GM10248 (cell line): ENCODE measurements at regions of chr5 and their contacts with region 1.

Region 1: DNA sequence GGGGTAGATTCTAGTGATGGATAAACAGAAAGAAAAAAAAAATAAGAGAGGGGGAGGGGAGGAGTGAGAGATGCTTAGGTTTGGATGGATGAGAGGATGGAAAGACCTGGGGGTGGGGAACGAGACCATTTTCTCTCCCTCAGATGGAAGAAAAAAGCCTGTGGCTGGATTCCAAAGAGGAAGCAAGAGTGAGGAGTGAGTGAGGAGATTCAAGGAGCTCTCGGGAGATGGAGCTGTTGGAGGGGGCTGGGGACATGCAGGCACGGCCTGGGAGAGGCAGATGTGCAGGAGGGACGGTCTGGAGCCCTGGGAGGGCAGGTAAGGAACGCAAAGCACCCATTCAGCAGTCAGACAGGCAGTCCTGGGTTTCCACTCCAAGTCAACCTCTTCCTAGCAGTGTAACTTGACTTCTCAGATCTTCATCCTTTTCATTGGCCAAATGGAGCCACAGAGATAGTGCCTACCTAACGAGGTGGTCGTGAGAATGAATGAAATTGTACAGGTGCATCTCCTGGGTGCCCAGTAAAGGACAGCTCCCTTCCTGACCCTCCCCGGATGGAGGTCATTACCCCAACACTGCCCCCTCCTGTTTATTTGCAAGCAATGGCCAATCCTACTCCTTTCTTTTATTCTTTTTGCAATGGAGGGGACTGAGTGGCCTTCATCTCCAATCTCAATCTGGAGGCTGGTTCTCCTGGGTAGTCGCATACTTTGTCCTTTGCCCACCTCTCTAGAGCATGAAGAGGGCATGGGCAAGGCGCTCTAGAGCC is 52.2 kb downstream of the PCDH1 start:
- DNase-seq: peak; percentile 60
- CTCF ChIP-seq: peak; percentile 29

Region 2: DNA sequence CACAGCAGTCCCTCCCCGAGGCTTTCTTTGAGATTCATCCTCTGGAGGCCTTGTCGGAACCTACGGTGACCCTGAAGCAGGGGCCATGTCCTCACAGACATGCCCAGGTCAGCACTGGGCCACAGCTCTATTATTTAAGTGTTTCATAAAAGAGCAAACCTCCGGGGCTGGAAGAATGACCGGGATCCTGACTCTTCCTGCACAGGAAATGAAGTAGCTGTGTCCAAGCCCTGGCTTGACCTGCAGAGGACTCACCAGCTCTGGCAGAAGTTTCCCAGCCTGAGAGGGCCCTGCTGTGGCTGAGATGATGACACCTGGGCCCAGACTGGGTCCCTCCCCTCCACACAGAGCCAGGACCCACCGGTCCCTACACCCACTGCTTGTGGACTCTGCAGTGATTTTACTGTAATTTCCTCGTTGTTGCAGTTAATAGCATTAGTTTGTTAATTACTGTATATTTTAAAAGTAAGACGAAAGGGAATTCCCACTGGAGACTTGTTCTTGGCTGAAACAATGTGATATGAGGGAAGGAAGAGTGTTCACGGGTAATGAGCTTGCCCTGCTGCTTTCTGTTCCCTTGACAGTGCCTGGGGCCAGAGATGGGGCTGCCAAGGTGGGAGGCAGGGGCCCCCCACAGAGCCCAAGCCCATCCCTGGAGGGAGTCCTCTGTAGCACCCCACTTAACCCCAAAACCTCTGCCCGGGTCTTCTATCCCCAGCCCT is 19.9 kb before region 1 on chr5:
- CTCF ChIA-PET with region 1: interaction called, 3 read pairs
- POLR2A ChIA-PET with region 1: interaction called, 13 read pairs
- DNase-seq: no peak
- CTCF ChIP-seq: no peak

Region 3: DNA sequence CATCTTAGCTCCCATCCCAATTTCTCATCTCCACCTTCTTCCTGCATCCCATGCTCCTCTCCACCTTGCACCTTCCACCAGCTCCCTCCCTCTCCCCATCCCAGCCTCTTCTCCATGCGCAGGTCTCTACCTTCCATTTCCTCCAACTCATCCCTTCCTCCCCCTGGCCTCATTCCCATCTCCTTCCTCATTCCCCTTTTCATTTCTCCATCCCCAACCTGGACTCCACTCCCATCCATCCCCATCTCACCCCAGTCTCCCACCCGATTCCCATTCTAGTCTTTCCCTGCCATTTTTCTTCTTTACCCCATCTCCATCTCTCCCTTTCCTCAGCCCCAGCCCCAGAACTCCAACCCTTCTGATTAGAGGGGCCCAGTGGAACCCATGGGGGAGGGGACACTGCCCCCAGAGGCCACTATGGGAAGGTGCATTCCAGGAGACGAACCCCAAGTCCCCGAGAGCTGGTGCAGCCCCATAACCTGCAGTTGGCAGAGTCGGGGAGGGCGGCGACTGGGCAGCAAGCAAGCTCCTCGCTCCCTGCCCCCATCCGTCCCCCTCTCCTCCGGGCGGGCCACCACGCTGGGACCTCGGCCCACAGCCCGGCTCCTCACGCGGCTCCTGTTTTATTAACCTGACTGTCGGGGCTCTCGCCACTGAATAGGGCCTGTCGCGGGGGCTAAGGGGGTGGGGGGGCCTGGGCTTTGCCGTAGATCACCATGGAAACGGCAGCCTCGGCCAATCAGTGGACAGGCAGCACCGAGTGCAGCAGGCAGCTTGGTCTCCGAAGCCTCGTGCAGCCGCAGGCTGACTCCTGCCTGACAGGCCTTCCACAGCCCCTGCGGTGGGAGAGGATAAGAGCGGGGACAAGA is 14.5 kb before region 1 on chr5:
- CTCF ChIA-PET with region 1: interaction called, 20 read pairs
- POLR2A ChIA-PET with region 1: no interaction called
- DNase-seq: peak; percentile 72
- CTCF ChIP-seq: peak; percentile 50

Region 4: DNA sequence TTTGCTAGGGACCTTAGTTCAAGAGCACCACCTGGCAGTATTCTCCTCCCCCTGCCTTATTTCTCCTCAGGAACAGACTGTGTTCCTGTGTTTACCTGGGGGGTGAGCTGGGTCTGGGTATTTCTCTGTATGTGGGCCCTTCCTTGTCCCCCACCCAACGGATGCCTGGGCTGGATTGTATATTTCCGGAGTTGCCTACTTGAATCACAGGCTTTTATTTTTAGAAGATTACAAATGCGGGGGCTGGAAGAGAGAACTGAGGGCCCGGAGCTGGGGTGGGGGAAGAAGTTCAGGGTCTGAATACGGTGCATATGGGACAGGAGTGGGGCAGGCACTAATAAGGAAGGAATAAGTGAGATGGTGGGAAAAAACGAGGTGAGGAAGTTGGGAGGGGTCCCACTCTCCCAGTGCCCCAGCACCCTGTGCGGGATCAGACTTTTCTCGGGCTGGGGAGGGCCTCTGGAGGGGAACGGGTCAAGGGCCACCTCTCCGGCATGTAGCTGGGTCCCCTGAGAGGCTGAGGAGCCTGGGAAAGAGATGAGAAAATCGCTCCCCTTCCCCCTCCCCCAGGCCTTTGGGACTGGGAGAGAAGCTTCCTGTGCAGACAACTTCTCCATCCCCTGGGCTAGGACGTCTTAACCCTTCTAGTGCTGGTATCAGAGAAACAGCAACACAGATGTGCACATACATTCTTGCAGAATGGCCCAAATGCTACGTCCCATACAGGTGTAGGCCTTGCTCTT is 10.1 kb after region 1 on chr5:
- CTCF ChIA-PET with region 1: interaction called, 24 read pairs
- POLR2A ChIA-PET with region 1: no interaction called
- DNase-seq: no peak
- CTCF ChIP-seq: no peak